Common myeloid progenitor, CD34-positive (primary cell): ENCODE measurements at regions of chr1 and their contacts with region 1.

Region 1: GRCh38 chr1:33295450-33296081 is 25.3 kb downstream of the A3GALT2 start:
- DNase-seq: peak; percentile 54 to 68 (median 61)
- H3K4me3 ChIP-seq: no peak overlapping the region
- H3K27ac ChIP-seq: no peak overlapping the region
- H3K4me1 ChIP-seq: peaks cover 0 to 4% (median 3%) of the 10 kb centered on the region in 4 experiments
- H3K27me3 ChIP-seq: no peaks in the 10 kb centered on the region

Region 2: GRCh38 chr1:33319949-33320605 is 24.5 kb after region 1 on chr1:
- CTCF ChIA-PET with region 1: interaction called, 10 read pairs
- POLR2A ChIA-PET with region 1: no interaction called
- DNase-seq: no peak
- H3K4me3 ChIP-seq: no peak overlapping the region
- H3K27ac ChIP-seq: no peak overlapping the region
- H3K4me1 ChIP-seq: peaks cover 0 to 4% (median 0%) of the 10 kb centered on the region in 4 experiments
- H3K27me3 ChIP-seq: no peaks in the 10 kb centered on the region

Region 3: GRCh38 chr1:33367485-33368405 is 72.2 kb after region 1 on chr1:
- CTCF ChIA-PET with region 1: interaction called, 90 read pairs
- POLR2A ChIA-PET with region 1: no interaction called
- DNase-seq: peak; percentile 71 to 80 (median 77)
- H3K4me3 ChIP-seq: peak overlapping the region in 1 of 7 experiments; percentile 8
- H3K27ac ChIP-seq: no peak overlapping the region
- H3K4me1 ChIP-seq: peaks cover 0 to 23% (median 5%) of the 10 kb centered on the region in 4 experiments
- H3K27me3 ChIP-seq: no peaks in the 10 kb centered on the region

Region 4: GRCh38 chr1:33472349-33472980 is 176.9 kb after region 1 on chr1 and contains the start of gene ZSCAN20:
- CTCF ChIA-PET with region 1: interaction called, 27 read pairs
- POLR2A ChIA-PET with region 1: no interaction called
- DNase-seq: peak; percentile 90 to 91 (median 90)
- H3K4me3 ChIP-seq: peak within 1 kb of the TSS; percentile 53 to 87 (median 75)
- H3K27ac ChIP-seq: peak within 1 kb of the TSS in 1 of 2 experiments; percentile 21
- H3K4me1 ChIP-seq: peaks cover 11 to 36% (median 28%) of the 10 kb centered on the region in 4 experiments
- H3K27me3 ChIP-seq: no peaks in the 10 kb centered on the region

Region 5: DNA sequence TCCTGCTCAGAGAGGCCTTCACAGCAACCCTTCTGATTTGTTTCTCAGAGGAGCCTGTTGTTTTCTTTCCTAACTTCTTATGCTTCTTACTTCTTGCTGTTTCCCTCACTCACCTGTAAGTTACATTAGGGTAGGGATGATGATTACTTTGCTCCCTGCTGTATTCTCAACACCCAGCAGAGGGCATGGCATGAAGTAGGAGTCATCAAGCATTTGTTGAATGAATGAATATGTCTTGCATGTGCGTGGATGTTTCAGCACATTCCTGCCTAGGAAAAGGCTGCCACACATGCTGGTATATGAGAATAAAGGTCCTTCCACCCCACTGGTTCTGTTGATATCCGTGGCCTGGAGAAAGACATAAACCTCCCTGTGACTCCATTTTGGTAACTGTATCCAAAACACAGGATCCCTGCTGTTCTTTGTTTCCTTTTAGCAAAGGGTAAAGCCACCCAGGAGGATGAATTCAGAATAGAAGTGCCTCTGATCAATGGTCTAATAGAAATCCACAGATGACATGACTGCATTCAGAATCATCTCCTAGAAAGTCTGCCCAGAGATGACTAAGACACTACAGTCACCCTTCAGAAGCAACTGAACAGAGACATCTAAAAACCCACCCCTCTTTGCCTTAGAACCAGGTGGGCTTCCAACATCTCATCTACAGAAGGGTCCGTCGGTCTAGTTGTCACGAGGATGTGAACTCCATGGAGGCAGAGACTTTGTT is 345.7 kb after region 1 on chr1:
- CTCF ChIA-PET with region 1: no interaction called
- POLR2A ChIA-PET with region 1: no interaction called
- DNase-seq: peak in 2 of 3 donors; percentile 12 to 13
- H3K4me3 ChIP-seq: no peak overlapping the region
- H3K27ac ChIP-seq: no peak overlapping the region
- H3K4me1 ChIP-seq: no peaks in the 10 kb centered on the region
- H3K27me3 ChIP-seq: peaks cover 0 to 12% (median 0%) of the 10 kb centered on the region in 5 experiments

Region 6: GRCh38 chr1:33864460-33865389 is 569.2 kb after region 1 on chr1:
- CTCF ChIA-PET with region 1: no interaction called
- POLR2A ChIA-PET with region 1: no interaction called
- DNase-seq: no peak
- H3K4me3 ChIP-seq: no peak overlapping the region
- H3K27ac ChIP-seq: no peak overlapping the region
- H3K4me1 ChIP-seq: no peaks in the 10 kb centered on the region
- H3K27me3 ChIP-seq: peaks cover 0 to 14% (median 3%) of the 10 kb centered on the region in 5 experiments